ENCODE measurements at regions of chr12 and their contacts with region 1.

Region 1: GRCh38 chr12:117367011-117367638 is 5.7 kb upstream of the NOS1 start:
- DNase-seq: no peak
- ATAC-seq: no peak
- H3K4me3 Mint-ChIP-seq: no peak overlapping the region
- H3K27ac Mint-ChIP-seq: no peak overlapping the region
- H3K4me1 Mint-ChIP-seq: no peaks in the 10 kb centered on the region
- H3K27me3 Mint-ChIP-seq: peaks cover 35% of the 10 kb centered on the region
- CTCF ChIP-seq: no peak

Region 2: DNA sequence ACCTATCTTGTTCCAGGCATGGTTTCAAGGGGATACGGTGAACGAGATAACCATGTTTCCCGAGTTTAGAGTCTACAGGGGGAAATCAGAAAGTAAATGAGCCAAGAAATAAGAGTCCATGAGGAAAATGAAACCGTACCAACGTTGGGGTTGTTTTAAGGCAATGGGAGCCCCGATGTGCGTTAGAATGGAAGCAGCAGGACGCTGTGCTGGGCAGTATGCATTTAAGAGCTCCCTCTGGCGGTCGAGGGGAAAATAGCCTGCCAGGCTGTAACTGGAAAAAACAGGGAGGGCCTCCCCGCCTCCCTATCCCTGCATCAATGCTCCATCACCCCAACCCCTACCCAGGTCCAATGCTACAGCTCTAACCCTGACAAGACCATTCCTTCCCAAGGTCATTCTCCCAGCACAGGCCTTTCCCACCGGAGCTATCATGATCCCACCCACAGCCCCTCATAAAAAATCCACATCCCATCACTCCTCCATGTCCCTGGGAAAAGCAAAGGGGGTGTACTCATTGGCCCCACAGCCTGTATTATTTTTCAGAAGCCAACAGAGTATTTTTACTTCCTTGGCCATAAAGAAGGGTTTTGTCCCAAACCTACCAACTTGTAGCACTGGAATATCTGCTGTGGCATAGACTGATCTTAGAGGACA is 220.6 kb after region 1 on chr12:
- CTCF ChIA-PET with region 1: interaction called, 3 read pairs
- POLR2A ChIA-PET with region 1: no interaction called
- intact Hi-C with region 1: loop called (anchors 5 kb)
- DNase-seq: peak; percentile 15
- ATAC-seq: no peak
- H3K4me3 Mint-ChIP-seq: no peak overlapping the region
- H3K27ac Mint-ChIP-seq: no peak overlapping the region
- H3K4me1 Mint-ChIP-seq: no peaks in the 10 kb centered on the region
- H3K27me3 Mint-ChIP-seq: peaks cover 15% of the 10 kb centered on the region
- CTCF ChIP-seq: no peak

Measured in activated B cell treated with CpG ODN at 0.5 μM for 24 hours (primary cell).